ENCODE measurements at regions of chr1 and their contacts with region 1.

Region 1: DNA sequence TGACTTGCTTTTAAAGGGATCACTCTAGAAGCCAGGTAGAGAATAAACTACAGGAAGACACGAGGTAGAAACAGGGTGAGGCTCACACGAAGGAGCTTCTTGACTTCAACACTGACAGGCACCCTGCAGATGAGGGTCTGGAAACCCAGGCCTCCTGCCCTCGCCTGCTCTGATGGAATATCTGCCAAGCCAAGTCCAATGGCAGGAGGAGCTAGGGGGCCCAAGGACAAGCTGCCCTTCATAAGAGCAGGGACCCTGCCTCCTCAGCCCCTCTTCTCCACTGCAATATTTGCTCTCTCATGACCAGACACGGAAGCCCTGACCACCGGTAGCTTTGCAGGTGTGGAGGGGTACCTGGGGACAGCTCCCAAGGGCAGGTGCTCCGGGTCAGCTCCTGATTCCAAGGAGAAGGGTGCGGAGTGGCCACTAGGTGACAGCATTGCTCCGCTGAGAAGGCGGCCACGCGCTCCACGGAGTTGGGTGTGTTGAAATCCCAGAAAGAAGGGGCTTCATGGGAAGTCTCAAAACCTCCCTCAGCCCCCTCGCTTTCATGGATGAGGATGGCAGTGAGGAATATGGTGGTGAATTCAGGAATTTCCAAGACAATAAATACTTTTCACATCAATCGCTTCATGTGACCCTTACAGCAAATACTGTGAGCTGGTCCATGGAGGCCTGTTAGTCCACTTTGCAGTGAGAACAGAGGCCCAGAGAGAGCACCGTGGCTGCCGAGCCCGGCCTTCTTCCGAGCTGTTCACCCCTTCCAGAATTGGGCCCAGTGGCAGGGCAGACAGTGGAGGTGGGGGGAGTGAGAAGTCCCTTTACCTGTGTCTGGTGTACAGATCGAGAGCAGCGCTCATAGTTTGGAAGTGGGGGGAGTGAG is 33.2 kb upstream of the PAX7 start:
- DNase-seq: peak; percentile 15 to 90
- H3K4me3 ChIP-seq: no peak overlapping the region
- H3K27ac ChIP-seq: no peak overlapping the region
- H3K4me1 ChIP-seq: peaks cover 0 to 2% (median under 1%) of the 10 kb centered on the region in 4 experiments; a peak in 1 of 7 replicates
- H3K27me3 ChIP-seq: peaks cover 0 to 11% (median 5%) of the 10 kb centered on the region in 4 experiments; a peak in 5 of 7 replicates
- CTCF ChIP-seq: peak; percentile 90 to 96 (median 95)
- EP300 ChIP-seq: no peak
- POLR2A ChIP-seq: no peak
- RAD21 ChIP-seq: peak; percentile 99 to 100

Region 2: GRCh38 chr1:18530587-18531502 is 66.6 kb before region 1 on chr1:
- CTCF ChIA-PET with region 1: no interaction called
- POLR2A ChIA-PET with region 1: no interaction called
- DNase-seq: peak in 1 of 2 experiments; percentile 48
- H3K4me3 ChIP-seq: no peak overlapping the region
- H3K27ac ChIP-seq: no peak overlapping the region
- H3K4me1 ChIP-seq: no peaks in the 10 kb centered on the region; a peak in 2 of 7 replicates
- H3K27me3 ChIP-seq: peaks cover 0 to 10% (median 3%) of the 10 kb centered on the region in 4 experiments; a peak in 5 of 7 replicates
- CTCF ChIP-seq: peak; percentile 52 to 68 (median 60)
- EP300 ChIP-seq: no peak
- POLR2A ChIP-seq: no peak
- RAD21 ChIP-seq: peak; percentile 69 to 79

Region 3: DNA sequence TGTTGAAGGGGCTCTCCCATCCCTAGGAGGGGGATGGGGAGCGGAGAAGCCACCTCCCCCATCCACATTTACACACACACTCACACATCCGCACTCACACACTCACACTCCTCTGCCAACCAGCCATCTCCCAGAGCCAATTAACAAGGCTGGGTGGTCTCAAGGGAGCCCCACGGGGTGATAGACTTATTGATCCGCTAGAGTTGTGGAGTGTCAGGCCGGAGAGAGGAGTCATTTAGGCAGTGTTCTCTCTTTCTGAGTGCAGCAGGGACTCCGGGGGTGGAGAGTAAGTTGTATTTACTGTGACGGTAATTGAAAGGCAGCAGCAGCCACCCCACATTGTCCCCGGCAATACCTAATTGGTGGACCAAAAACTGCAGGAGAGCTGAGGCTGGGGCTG is 55.0 kb before region 1 on chr1:
- CTCF ChIA-PET with region 1: no interaction called
- POLR2A ChIA-PET with region 1: no interaction called
- DNase-seq: no peak
- H3K4me3 ChIP-seq: peak overlapping the region in 3 of 4 experiments; percentile 2 to 18 (median 14); a peak in 4 of 8 replicates
- H3K27ac ChIP-seq: no peak overlapping the region
- H3K4me1 ChIP-seq: peaks cover 0 to 7% (median 3%) of the 10 kb centered on the region in 4 experiments; a peak in 5 of 7 replicates
- H3K27me3 ChIP-seq: peaks cover 0 to 7% (median 0%) of the 10 kb centered on the region in 4 experiments; a peak in 4 of 7 replicates
- CTCF ChIP-seq: no peak
- EP300 ChIP-seq: no peak
- POLR2A ChIP-seq: no peak
- RAD21 ChIP-seq: no peak

Region 4: DNA sequence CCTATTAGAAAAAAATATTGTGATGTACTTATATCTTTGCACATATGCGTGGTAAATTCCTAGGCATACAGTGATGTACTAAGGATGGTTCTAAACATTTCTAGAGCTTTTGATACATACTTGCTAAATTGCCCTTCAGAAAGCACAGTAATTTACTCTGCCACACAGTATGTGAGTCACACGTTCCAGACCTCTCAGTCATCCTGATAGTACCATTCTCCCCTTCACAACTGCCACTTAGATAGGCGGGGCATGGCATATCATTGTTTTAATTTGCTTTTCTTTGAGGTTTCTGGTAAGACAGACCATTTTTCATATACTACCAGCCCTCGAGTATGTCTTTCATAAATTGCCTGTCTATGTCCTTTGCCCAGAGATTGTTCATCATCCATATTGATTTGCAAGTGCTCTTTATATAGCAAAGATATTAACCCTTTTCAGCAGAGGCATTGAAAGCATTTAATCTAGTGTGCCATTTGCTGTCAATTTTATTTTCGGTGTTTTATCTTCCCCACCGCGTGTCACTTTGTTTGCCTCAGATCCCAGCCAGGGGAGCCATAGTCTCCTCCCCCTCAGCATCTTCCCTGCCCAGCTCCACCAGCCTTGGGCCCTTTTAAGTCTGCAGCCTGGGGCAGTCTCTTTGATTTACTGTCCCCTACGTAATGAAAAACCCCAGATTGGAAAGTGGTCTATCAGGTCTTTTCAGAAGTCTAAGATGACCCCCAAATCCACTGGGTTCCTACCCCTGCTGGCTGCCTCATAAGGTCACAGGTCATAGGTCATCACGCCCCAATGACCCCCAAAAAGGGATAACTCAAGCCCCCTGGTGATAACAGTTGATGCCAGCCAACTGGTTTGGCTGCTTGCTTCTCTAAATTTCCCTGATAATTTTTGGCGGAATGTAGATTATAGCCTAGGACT is 21.4 kb after region 1 on chr1:
- CTCF ChIA-PET with region 1: interaction called, 22 read pairs
- POLR2A ChIA-PET with region 1: no interaction called
- DNase-seq: no peak
- H3K4me3 ChIP-seq: no peak overlapping the region
- H3K27ac ChIP-seq: no peak overlapping the region
- H3K4me1 ChIP-seq: no peaks in the 10 kb centered on the region
- H3K27me3 ChIP-seq: peaks cover 0 to 5% (median 2%) of the 10 kb centered on the region in 4 experiments; a peak in 3 of 7 replicates
- CTCF ChIP-seq: no peak
- EP300 ChIP-seq: no peak
- POLR2A ChIP-seq: no peak
- RAD21 ChIP-seq: no peak

Region 5: GRCh38 chr1:18673975-18674374 is 76.6 kb after region 1 on chr1:
- CTCF ChIA-PET with region 1: interaction called, 44 read pairs
- POLR2A ChIA-PET with region 1: no interaction called
- DNase-seq: no peak
- H3K4me3 ChIP-seq: no peak overlapping the region
- H3K27ac ChIP-seq: no peak overlapping the region
- H3K4me1 ChIP-seq: peaks cover 13 to 29% (median 20%) of the 10 kb centered on the region in 4 experiments
- H3K27me3 ChIP-seq: peaks cover 0 to 41% (median 31%) of the 10 kb centered on the region in 4 experiments; a peak in 5 of 7 replicates
- CTCF ChIP-seq: peak in 2 of 3 experiments; percentile 23 to 28; a peak in 3 of 4 replicates
- EP300 ChIP-seq: no peak
- POLR2A ChIP-seq: no peak
- RAD21 ChIP-seq: peak in 1 of 2 experiments; percentile 38; a peak in 1 of 4 replicates

Region 6: GRCh38 chr1:18723701-18724411 is 126.5 kb after region 1 on chr1:
- CTCF ChIA-PET with region 1: interaction called, 36 read pairs
- POLR2A ChIA-PET with region 1: no interaction called
- DNase-seq: peak in 1 of 2 experiments; percentile 55
- H3K4me3 ChIP-seq: no peak overlapping the region
- H3K27ac ChIP-seq: no peak overlapping the region
- H3K4me1 ChIP-seq: peaks cover 0 to 13% (median 3%) of the 10 kb centered on the region in 4 experiments; a peak in 3 of 7 replicates
- H3K27me3 ChIP-seq: peaks cover 0 to 23% (median 14%) of the 10 kb centered on the region in 4 experiments; a peak in 6 of 7 replicates
- CTCF ChIP-seq: no peak
- EP300 ChIP-seq: no peak
- POLR2A ChIP-seq: no peak
- RAD21 ChIP-seq: no peak

Region 7: DNA sequence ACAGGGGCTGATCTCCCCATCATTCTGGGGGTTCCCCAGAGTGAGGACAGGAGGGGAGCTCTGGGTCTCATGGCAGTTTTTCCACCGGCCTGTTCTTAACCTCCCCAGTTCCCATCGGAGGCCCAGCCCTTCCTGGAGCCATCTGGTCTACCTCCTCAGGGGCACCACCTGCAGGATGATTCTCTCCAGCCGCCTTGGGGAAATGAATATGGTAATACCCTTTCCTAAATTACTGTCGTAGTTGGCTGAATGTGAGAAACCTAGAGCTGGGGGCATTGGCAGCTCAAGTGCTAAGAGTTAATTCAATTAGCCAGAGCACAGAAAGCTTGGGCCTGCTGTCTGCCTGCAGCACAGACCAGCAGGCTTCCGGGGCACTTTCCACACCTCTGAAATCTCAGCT is 197.2 kb after region 1 on chr1:
- CTCF ChIA-PET with region 1: interaction called, 16 read pairs
- POLR2A ChIA-PET with region 1: interaction called, 3 read pairs
- DNase-seq: peak; percentile 33 to 78
- H3K4me3 ChIP-seq: no peak overlapping the region; a peak in 1 of 8 replicates
- H3K27ac ChIP-seq: no peak overlapping the region
- H3K4me1 ChIP-seq: peaks cover 3 to 15% (median 7%) of the 10 kb centered on the region in 4 experiments; a peak in 6 of 7 replicates
- H3K27me3 ChIP-seq: peaks cover 0 to 4% (median 0%) of the 10 kb centered on the region in 4 experiments; a peak in 3 of 7 replicates
- CTCF ChIP-seq: peak; percentile 49 to 60 (median 56)
- EP300 ChIP-seq: no peak
- POLR2A ChIP-seq: no peak
- RAD21 ChIP-seq: peak; percentile 41 to 59

Region 8: GRCh38 chr1:18849261-18849711 is 251.9 kb after region 1 on chr1:
- CTCF ChIA-PET with region 1: interaction called, 10 read pairs
- POLR2A ChIA-PET with region 1: no interaction called
- DNase-seq: no peak
- H3K4me3 ChIP-seq: no peak overlapping the region
- H3K27ac ChIP-seq: no peak overlapping the region
- H3K4me1 ChIP-seq: no peaks in the 10 kb centered on the region
- H3K27me3 ChIP-seq: peaks cover 0 to 9% (median 4%) of the 10 kb centered on the region in 4 experiments; a peak in 4 of 7 replicates
- CTCF ChIP-seq: no peak
- EP300 ChIP-seq: no peak
- POLR2A ChIP-seq: no peak
- RAD21 ChIP-seq: no peak

Measured in H1 (cell line).